ENCODE measurements at regions of chr12 and their contacts with region 1.

Region 1: GRCh38 chr12:47021298-47021697 is 58.1 kb upstream of the PCED1B start:
- DNase-seq: peak; percentile 56
- H3K4me3 ChIP-seq: no peak overlapping the region
- H3K27ac ChIP-seq: no peak overlapping the region
- H3K4me1 ChIP-seq: no peaks in the 10 kb centered on the region
- CTCF ChIP-seq: peak; percentile 94

Region 2: GRCh38 chr12:46342562-46343033 is 678.7 kb before region 1 on chr12:
- CTCF ChIA-PET with region 1: no interaction called
- POLR2A ChIA-PET with region 1: no interaction called
- intact Hi-C with region 1: loop called (anchors 2 kb)
- DNase-seq: peak; percentile 48
- H3K4me3 ChIP-seq: no peak overlapping the region
- H3K27ac ChIP-seq: no peak overlapping the region
- H3K4me1 ChIP-seq: no peaks in the 10 kb centered on the region
- CTCF ChIP-seq: peak; percentile 81

Region 3: DNA sequence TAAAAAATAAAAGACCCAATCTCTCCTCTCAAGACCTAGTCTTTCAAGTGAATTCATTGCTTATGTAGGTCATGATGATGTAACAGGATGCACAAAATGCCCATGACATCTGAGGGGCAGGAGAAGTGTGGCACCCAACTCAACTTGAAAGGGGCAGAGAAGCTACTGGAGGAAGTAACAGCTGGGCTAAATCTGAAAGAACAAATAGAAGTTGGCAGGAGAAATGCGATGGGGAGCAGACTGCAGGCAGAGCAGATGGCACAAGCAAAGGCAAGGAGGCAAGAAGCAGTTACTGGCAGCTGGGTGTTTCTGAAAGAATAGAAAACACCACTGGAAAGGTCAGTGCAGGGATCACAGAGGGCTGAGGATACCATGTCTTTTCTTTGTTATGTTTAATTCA is 210.1 kb before region 1 on chr12:
- CTCF ChIA-PET with region 1: no interaction called
- POLR2A ChIA-PET with region 1: no interaction called
- intact Hi-C with region 1: no loop called
- DNase-seq: no peak
- H3K4me3 ChIP-seq: no peak overlapping the region
- H3K27ac ChIP-seq: no peak overlapping the region
- H3K4me1 ChIP-seq: no peaks in the 10 kb centered on the region
- CTCF ChIP-seq: no peak

Region 4: GRCh38 chr12:47307680-47308399 is 286.5 kb after region 1 on chr12:
- CTCF ChIA-PET with region 1: no interaction called
- POLR2A ChIA-PET with region 1: no interaction called
- intact Hi-C with region 1: no loop called
- DNase-seq: peak; percentile 76
- H3K4me3 ChIP-seq: no peak overlapping the region
- H3K27ac ChIP-seq: no peak overlapping the region
- H3K4me1 ChIP-seq: peaks cover 15% of the 10 kb centered on the region
- CTCF ChIP-seq: peak; percentile 96

Measured in OCI-LY7 (cell line).